ENCODE measurements at regions of chr10 and their contacts with region 1.

Region 1: GRCh38 chr10:58291538-58292174 is 22.7 kb downstream of the CISD1 start:
- DNase-seq: peak; percentile 49 to 68 (median 59)
- H3K4me3 ChIP-seq: no peak overlapping the region
- H3K4me3 Mint-ChIP-seq: no peak overlapping the region
- H3K27ac ChIP-seq: no peak overlapping the region
- H3K27ac Mint-ChIP-seq: peak overlapping the region in 1 of 7 donors; percentile 6
- H3K4me1 ChIP-seq: no peaks in the 10 kb centered on the region
- H3K4me1 Mint-ChIP-seq: no peaks in the 10 kb centered on the region
- H3K27me3 ChIP-seq: no peaks in the 10 kb centered on the region
- H3K27me3 Mint-ChIP-seq: peaks cover 0 to 2% (median 2%) of the 10 kb centered on the region in 3 donors
- CTCF ChIP-seq: peak; percentile 78

Region 2: DNA sequence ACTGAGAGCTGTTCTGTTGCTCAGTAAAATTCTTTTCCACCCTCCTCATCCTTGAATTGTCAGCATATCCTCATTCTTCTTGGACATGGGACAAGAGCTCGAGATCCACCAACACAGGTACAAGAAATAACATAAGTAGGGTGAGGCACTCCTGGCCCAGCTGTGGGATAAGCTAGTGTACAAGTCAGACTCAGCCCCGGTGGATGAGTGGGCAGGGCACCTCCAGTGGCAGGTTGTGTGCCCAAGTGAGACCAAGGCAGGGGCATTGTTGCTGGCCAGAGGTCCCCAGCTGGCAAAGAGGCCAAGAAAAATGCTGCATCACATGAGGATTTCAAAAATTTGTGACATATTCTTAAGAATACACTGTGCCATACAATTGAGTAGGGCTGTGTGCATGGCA is 1528.6 kb before region 1 on chr10:
- intact Hi-C with region 1: no loop called
- DNase-seq: no peak
- H3K4me3 ChIP-seq: no peak overlapping the region
- H3K4me3 Mint-ChIP-seq: no peak overlapping the region
- H3K27ac ChIP-seq: no peak overlapping the region
- H3K27ac Mint-ChIP-seq: peak overlapping the region in 1 of 7 donors; percentile 70
- H3K4me1 ChIP-seq: no peaks in the 10 kb centered on the region
- H3K4me1 Mint-ChIP-seq: no peaks in the 10 kb centered on the region
- H3K27me3 ChIP-seq: no peaks in the 10 kb centered on the region
- H3K27me3 Mint-ChIP-seq: no peaks in the 10 kb centered on the region
- CTCF ChIP-seq: no peak

Region 3: GRCh38 chr10:58177362-58177947 is 114.2 kb before region 1 on chr10:
- intact Hi-C with region 1: loop called (anchors 5 kb)
- DNase-seq: peak in 2 of 3 donors; percentile 11 to 47
- H3K4me3 ChIP-seq: no peak overlapping the region
- H3K4me3 Mint-ChIP-seq: no peak overlapping the region
- H3K27ac ChIP-seq: no peak overlapping the region
- H3K27ac Mint-ChIP-seq: no peak overlapping the region
- H3K4me1 ChIP-seq: no peaks in the 10 kb centered on the region
- H3K4me1 Mint-ChIP-seq: no peaks in the 10 kb centered on the region
- H3K27me3 ChIP-seq: peaks cover 0 to 2% of the 10 kb centered on the region in 2 donors
- H3K27me3 Mint-ChIP-seq: peaks cover 0 to 4% (median 3%) of the 10 kb centered on the region in 3 donors
- CTCF ChIP-seq: peak; percentile 83